ENCODE measurements at regions of chr19 and their contacts with region 1.

Region 1: GRCh38 chr19:15288146-15288963 is 44.0 kb downstream of the BRD4 start:
- DNase-seq: no peak
- ATAC-seq: peak; percentile 61 to 65 (median 62)
- H3K4me3 ChIP-seq: no peak overlapping the region
- H3K4me3 Mint-ChIP-seq: peak overlapping the region; percentile 70
- H3K27ac ChIP-seq: peak overlapping the region; percentile 14
- H3K27ac Mint-ChIP-seq: peak overlapping the region; percentile 67 to 82
- H3K4me1 ChIP-seq: peaks cover 80% of the 10 kb centered on the region
- H3K4me1 Mint-ChIP-seq: peaks cover 87 to 95% of the 10 kb centered on the region in 2 donors
- H3K27me3 ChIP-seq: no peaks in the 10 kb centered on the region
- H3K27me3 Mint-ChIP-seq: no peaks in the 10 kb centered on the region
- CTCF ChIP-seq: no peak

Region 2: GRCh38 chr19:15303105-15303780 is 14.9 kb after region 1 on chr19:
- intact Hi-C with region 1: loop called (anchors 2 kb)
- DNase-seq: no peak
- ATAC-seq: no peak
- H3K4me3 ChIP-seq: no peak overlapping the region
- H3K4me3 Mint-ChIP-seq: peak overlapping the region; percentile 31
- H3K27ac ChIP-seq: no peak overlapping the region
- H3K27ac Mint-ChIP-seq: peak overlapping the region; percentile 78 to 81
- H3K4me1 ChIP-seq: peaks cover 55% of the 10 kb centered on the region
- H3K4me1 Mint-ChIP-seq: peaks cover 73 to 84% of the 10 kb centered on the region in 2 donors
- H3K27me3 ChIP-seq: no peaks in the 10 kb centered on the region
- H3K27me3 Mint-ChIP-seq: no peaks in the 10 kb centered on the region
- CTCF ChIP-seq: no peak

Region 3: GRCh38 chr19:15324791-15325519 is 36.6 kb after region 1 on chr19:
- intact Hi-C with region 1: loop called (anchors 5 kb)
- DNase-seq: peak in 1 of 2 donors; percentile 45
- ATAC-seq: peak; percentile 25 to 47 (median 45)
- H3K4me3 ChIP-seq: no peak overlapping the region
- H3K4me3 Mint-ChIP-seq: peak overlapping the region; percentile 40
- H3K27ac ChIP-seq: no peak overlapping the region
- H3K27ac Mint-ChIP-seq: peak overlapping the region; percentile 80 to 88
- H3K4me1 ChIP-seq: peaks cover 63% of the 10 kb centered on the region
- H3K4me1 Mint-ChIP-seq: peaks cover 87 to 88% of the 10 kb centered on the region in 2 donors
- H3K27me3 ChIP-seq: no peaks in the 10 kb centered on the region
- H3K27me3 Mint-ChIP-seq: no peaks in the 10 kb centered on the region
- CTCF ChIP-seq: no peak

Region 4: DNA sequence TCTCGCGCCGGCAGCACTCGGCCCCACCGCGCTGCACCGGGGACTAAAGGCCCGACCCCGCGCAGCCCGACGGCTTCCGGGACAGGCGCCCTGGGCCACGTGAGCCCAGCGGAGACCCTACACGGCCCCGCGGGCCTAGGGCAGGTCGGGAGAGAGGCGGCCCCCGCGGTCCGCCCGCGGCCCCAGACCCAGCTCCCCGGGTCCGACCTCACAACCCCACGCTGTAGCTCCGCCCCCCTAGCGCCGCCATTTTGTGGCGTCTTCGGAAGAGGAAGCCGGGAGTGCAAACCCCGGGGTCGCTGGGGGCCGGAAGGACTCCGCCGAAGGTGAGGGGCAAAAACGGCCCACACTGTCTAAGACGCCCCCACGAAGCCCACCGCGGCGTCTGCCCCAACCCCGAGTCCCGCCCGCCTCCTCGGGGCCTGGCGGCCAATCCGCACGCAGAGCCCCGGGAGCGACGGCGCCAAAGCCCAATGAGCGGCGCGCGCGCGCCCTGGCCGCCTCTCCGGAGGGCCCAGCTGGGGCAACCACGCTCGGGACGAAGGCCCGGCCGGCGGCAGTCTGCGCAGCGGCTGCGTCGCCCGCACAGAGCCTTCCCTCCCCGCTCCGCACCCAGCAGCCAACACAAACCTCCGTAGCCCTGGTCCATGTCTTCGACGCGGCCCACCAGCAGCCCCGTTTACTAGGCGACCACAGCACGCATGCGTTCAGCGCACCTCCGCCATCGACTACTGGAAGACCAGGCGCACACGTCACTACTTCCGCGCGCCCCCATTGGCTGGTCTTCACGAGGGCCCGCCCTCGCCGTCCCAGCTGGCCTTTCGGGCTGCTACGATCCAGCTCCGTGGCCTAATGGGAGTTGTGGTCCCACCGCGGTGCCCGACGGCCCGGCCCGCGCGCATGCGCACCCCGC is 91.0 kb after region 1 on chr19 and contains the start of gene AKAP8:
- intact Hi-C with region 1: loop called (anchors 5 kb)
- DNase-seq: peak; percentile 98 to 99
- ATAC-seq: peak; percentile 89 to 97 (median 91)
- H3K4me3 ChIP-seq: peak within 1 kb of the TSS; percentile 84
- H3K4me3 Mint-ChIP-seq: peak within 1 kb of the TSS; percentile 98
- H3K27ac ChIP-seq: peak within 1 kb of the TSS; percentile 98
- H3K27ac Mint-ChIP-seq: peak within 1 kb of the TSS; percentile 92 to 93
- H3K4me1 ChIP-seq: peaks cover 34% of the 10 kb centered on the region
- H3K4me1 Mint-ChIP-seq: peaks cover 25 to 37% of the 10 kb centered on the region in 2 donors
- H3K27me3 ChIP-seq: no peaks in the 10 kb centered on the region
- H3K27me3 Mint-ChIP-seq: no peaks in the 10 kb centered on the region
- CTCF ChIP-seq: no peak
- total RNA-seq, gene AKAP8: 65.3 to 87.6 (median 76.9) TPM